Activated CD8-positive, alpha-beta T cell treated with anti-CD3 and anti-CD28 coated beads for 36 hours (primary cell): ENCODE measurements at regions of chr3 and their contacts with region 1.

Region 1: DNA sequence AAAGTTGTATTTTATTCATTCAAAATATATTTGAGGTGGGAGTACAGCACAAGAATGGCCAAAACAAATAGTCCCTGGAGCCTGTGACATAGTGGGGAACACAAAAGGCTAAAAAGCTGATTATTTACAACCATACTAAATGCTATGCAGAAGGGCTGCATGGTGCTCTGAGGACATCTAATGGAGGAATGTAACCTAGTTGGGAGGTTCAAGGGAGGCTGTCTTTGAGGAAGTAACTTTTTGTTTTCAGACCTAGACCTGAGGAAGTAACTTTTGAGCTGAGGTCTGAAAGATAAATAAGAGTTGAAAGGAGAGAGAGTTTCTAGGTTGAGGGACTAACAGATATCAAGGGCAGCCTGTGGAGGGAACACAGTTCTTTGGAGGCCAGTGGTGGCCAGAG is 34.8 kb upstream of the RASA2 start:
- DNase-seq: peak; percentile 63
- ATAC-seq: peak; percentile 75
- H3K4me3 Mint-ChIP-seq: no peak overlapping the region
- H3K27ac Mint-ChIP-seq: no peak overlapping the region
- H3K4me1 Mint-ChIP-seq: peaks cover 15% of the 10 kb centered on the region
- H3K27me3 Mint-ChIP-seq: no peaks in the 10 kb centered on the region
- CTCF ChIP-seq: peak; percentile 76

Region 2: GRCh38 chr3:140251678-140252077 is 1200.4 kb before region 1 on chr3:
- CTCF ChIA-PET with region 1: no interaction called
- POLR2A ChIA-PET with region 1: no interaction called
- intact Hi-C with region 1: no loop called
- DNase-seq: no peak
- ATAC-seq: no peak
- H3K4me3 Mint-ChIP-seq: no peak overlapping the region
- H3K27ac Mint-ChIP-seq: no peak overlapping the region
- H3K4me1 Mint-ChIP-seq: no peaks in the 10 kb centered on the region
- H3K27me3 Mint-ChIP-seq: peaks cover 3% of the 10 kb centered on the region
- CTCF ChIP-seq: no peak

Region 3: DNA sequence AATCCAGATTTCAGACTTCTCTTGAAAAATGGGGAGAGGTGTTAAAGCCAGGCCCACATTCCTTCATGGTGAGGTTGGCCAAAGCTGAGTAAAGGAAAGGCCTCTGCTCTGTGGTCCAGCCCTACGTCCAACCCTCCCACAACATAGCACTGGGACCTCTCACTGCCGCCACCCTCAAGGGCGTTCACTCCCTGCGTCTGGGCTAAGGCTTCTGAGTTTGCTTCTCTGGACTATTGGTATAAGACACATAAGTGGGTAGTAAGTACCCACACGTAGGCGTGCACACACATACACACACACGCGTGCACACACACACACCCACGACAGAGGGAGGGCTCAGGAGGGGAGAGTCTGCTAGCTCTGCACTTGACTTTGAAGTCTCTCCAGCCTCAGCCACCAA is 300.6 kb before region 1 on chr3:
- CTCF ChIA-PET with region 1: no interaction called
- POLR2A ChIA-PET with region 1: no interaction called
- intact Hi-C with region 1: no loop called
- DNase-seq: no peak
- ATAC-seq: no peak
- H3K4me3 Mint-ChIP-seq: no peak overlapping the region
- H3K27ac Mint-ChIP-seq: no peak overlapping the region
- H3K4me1 Mint-ChIP-seq: no peaks in the 10 kb centered on the region
- H3K27me3 Mint-ChIP-seq: no peaks in the 10 kb centered on the region
- CTCF ChIP-seq: no peak

Region 4: GRCh38 chr3:141225939-141226338 is 226.1 kb before region 1 on chr3:
- CTCF ChIA-PET with region 1: no interaction called
- POLR2A ChIA-PET with region 1: no interaction called
- intact Hi-C with region 1: no loop called
- DNase-seq: no peak
- ATAC-seq: no peak
- H3K4me3 Mint-ChIP-seq: no peak overlapping the region
- H3K27ac Mint-ChIP-seq: no peak overlapping the region
- H3K4me1 Mint-ChIP-seq: peaks cover 11% of the 10 kb centered on the region
- H3K27me3 Mint-ChIP-seq: no peaks in the 10 kb centered on the region
- CTCF ChIP-seq: no peak

Region 5: DNA sequence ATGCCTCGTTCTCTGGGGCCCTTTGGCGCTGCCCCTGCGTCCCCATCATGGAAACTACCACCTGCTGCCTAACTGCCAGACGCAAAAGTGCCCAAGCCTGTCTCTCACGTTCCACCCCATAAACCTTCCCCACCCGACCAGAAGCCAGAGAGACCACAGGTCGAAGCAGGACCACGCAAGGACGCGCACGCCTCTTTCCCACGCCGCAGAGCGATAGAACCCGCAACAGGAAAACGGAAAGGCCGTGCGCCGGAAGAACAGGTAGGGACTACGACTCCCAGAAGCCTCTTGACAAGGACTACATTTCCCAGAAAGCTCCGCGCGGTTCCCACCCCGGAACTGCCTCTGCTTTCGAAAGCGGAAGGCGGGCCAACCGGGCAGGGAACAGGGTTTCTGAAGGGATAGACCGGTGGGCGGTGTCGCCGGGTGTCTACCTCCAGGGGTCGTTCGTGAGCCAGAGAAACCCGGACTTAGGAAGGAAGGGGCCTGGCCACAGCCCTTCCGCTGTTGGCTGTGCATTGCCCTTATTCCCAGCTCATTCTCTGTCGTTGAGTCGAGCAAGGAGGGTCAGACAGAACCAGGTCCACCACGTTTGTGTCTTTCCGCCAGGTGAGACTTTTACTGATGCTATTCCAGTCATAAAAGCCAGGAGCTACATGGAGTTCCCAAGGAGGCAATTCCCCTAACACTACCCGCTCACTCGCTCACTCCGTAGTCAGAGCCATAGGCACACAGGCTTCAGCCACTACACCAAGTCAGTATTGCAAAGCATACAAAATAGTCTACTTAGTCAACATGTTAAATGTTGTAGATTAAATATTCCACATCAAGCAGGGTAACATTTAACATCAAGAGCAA is 140.3 kb before region 1 on chr3:
- CTCF ChIA-PET with region 1: interaction called, 418 read pairs
- POLR2A ChIA-PET with region 1: interaction called, 7 read pairs
- intact Hi-C with region 1: loop called (anchors 5 kb)
- DNase-seq: peak; percentile 99
- ATAC-seq: peak; percentile 94
- H3K4me3 Mint-ChIP-seq: peak overlapping the region; percentile 89
- H3K27ac Mint-ChIP-seq: peak overlapping the region; percentile 99
- H3K4me1 Mint-ChIP-seq: peaks cover 49% of the 10 kb centered on the region
- H3K27me3 Mint-ChIP-seq: no peaks in the 10 kb centered on the region
- CTCF ChIP-seq: peak; percentile 77

Region 6: DNA sequence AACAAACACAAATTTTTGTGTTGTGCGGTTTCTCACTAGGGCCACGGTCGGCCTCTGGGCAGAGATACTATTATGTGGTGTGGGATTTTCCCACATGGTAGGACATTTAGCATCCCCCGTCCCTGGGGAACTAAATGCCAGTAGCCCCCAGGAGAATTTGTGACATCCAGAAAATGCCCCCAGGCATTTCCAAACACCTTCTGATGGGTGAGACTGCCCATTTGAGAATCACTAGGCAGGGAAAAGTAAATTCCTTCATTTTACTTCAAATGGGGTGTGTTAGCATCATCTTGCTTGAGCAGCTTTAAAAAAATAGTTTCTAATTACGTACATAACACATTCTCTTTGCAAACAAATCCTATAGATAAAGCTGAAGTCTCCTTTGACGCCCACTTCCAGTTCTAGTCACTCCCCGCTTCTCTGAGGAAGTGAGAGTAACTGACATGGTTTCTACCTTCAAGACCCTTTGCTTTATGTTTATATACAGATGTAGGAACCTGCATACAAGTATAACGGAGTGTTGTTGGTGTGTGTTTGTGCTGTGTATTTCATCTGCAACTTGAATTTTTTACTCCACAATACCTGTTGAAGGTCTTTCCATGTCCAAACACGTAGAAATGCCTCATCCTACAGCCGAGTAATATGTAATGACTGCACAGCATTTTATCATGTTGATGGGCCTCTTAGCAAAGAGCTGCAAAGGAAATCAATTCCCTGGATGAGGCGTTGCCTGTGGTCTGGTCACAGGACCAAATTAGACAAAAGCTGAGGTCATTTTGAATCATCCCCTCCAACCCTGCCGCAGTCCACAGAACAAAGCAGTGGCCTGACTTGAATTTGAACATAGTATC is 115.1 kb before region 1 on chr3:
- CTCF ChIA-PET with region 1: interaction called, 11 read pairs
- POLR2A ChIA-PET with region 1: no interaction called
- intact Hi-C with region 1: no loop called
- DNase-seq: no peak
- ATAC-seq: no peak
- H3K4me3 Mint-ChIP-seq: no peak overlapping the region
- H3K27ac Mint-ChIP-seq: no peak overlapping the region
- H3K4me1 Mint-ChIP-seq: no peaks in the 10 kb centered on the region
- H3K27me3 Mint-ChIP-seq: no peaks in the 10 kb centered on the region
- CTCF ChIP-seq: no peak

Region 7: DNA sequence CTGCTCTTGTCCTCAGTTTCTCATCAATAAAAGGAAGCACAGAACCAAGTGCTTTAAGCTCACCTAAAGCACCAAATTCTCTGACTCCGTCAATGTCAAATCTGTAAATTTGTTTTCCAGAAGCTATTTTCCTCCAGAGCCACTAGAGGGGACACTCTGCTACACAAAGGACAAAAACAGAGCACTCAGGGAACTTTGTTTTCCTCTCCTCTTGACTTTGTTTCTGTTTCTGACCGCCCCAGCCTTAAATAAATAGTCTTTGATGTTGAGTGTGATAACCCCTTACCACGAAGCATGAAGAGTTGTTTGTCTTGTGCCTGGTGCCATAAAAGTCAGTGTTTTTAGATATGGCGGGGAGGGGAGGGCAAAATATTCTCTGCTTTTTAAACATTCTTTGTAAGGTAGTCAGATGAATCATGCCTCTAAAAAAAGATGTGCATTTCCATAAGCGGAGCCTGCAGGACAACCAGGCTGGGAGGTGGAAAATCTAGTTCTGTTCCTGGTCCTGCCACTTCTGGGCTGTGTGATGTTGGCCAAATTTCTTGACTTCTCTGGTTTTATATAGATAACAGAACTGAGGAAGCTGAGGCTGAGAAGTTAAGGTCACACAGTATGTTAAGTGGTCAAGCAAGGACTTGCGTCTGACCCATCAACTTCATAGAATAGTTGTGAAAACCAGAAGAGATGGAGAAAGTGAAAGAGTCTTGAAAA is 91.0 kb before region 1 on chr3:
- CTCF ChIA-PET with region 1: interaction called, 112 read pairs
- POLR2A ChIA-PET with region 1: interaction called, 3 read pairs
- intact Hi-C with region 1: loop called (anchors 5 kb)
- DNase-seq: no peak
- ATAC-seq: peak; percentile 84
- H3K4me3 Mint-ChIP-seq: no peak overlapping the region
- H3K27ac Mint-ChIP-seq: no peak overlapping the region
- H3K4me1 Mint-ChIP-seq: peaks cover 5% of the 10 kb centered on the region
- H3K27me3 Mint-ChIP-seq: no peaks in the 10 kb centered on the region
- CTCF ChIP-seq: peak; percentile 77

Region 8: GRCh38 chr3:141370065-141370533 is 81.9 kb before region 1 on chr3:
- CTCF ChIA-PET with region 1: interaction called, 48 read pairs
- POLR2A ChIA-PET with region 1: no interaction called
- intact Hi-C with region 1: no loop called
- DNase-seq: peak; percentile 73
- ATAC-seq: peak; percentile 94
- H3K4me3 Mint-ChIP-seq: no peak overlapping the region
- H3K27ac Mint-ChIP-seq: peak overlapping the region; percentile 56
- H3K4me1 Mint-ChIP-seq: peaks cover 53% of the 10 kb centered on the region
- H3K27me3 Mint-ChIP-seq: no peaks in the 10 kb centered on the region
- CTCF ChIP-seq: peak; percentile 24

Region 9: GRCh38 chr3:141426404-141427034 is 25.5 kb before region 1 on chr3:
- CTCF ChIA-PET with region 1: interaction called, 11 read pairs
- POLR2A ChIA-PET with region 1: interaction called, 3 read pairs
- intact Hi-C with region 1: no loop called
- DNase-seq: no peak
- ATAC-seq: no peak
- H3K4me3 Mint-ChIP-seq: no peak overlapping the region
- H3K27ac Mint-ChIP-seq: no peak overlapping the region
- H3K4me1 Mint-ChIP-seq: peaks cover 18% of the 10 kb centered on the region
- H3K27me3 Mint-ChIP-seq: no peaks in the 10 kb centered on the region
- CTCF ChIP-seq: no peak